ENCODE measurements at regions of chr5 and their contacts with region 1.

Region 1: GRCh38 chr5:31427013-31427723 is 104.7 kb downstream of the DROSHA start:
- DNase-seq: no peak
- H3K4me3 Mint-ChIP-seq: no peak overlapping the region
- H3K27ac Mint-ChIP-seq: peak overlapping the region; percentile 18
- H3K4me1 Mint-ChIP-seq: peaks cover 3% of the 10 kb centered on the region
- H3K27me3 Mint-ChIP-seq: no peaks in the 10 kb centered on the region

Region 2: GRCh38 chr5:31346896-31347551 is 80.1 kb before region 1 on chr5:
- CTCF ChIA-PET with region 1: no interaction called
- POLR2A ChIA-PET with region 1: no interaction called
- intact Hi-C with region 1: no loop called
- DNase-seq: no peak
- H3K4me3 Mint-ChIP-seq: no peak overlapping the region
- H3K27ac Mint-ChIP-seq: no peak overlapping the region
- H3K4me1 Mint-ChIP-seq: no peaks in the 10 kb centered on the region
- H3K27me3 Mint-ChIP-seq: peaks cover 3% of the 10 kb centered on the region

Region 3: GRCh38 chr5:31413030-31413812 is 13.9 kb before region 1 on chr5:
- CTCF ChIA-PET with region 1: no interaction called
- POLR2A ChIA-PET with region 1: no interaction called
- intact Hi-C with region 1: loop called (anchors 1 kb)
- DNase-seq: peak; percentile 15
- H3K4me3 Mint-ChIP-seq: no peak overlapping the region
- H3K27ac Mint-ChIP-seq: peak overlapping the region; percentile 66
- H3K4me1 Mint-ChIP-seq: peaks cover 14% of the 10 kb centered on the region
- H3K27me3 Mint-ChIP-seq: no peaks in the 10 kb centered on the region